CD4-positive, alpha-beta memory T cell (primary cell): ENCODE measurements at regions of chr3 and their contacts with region 1.

Region 1: DNA sequence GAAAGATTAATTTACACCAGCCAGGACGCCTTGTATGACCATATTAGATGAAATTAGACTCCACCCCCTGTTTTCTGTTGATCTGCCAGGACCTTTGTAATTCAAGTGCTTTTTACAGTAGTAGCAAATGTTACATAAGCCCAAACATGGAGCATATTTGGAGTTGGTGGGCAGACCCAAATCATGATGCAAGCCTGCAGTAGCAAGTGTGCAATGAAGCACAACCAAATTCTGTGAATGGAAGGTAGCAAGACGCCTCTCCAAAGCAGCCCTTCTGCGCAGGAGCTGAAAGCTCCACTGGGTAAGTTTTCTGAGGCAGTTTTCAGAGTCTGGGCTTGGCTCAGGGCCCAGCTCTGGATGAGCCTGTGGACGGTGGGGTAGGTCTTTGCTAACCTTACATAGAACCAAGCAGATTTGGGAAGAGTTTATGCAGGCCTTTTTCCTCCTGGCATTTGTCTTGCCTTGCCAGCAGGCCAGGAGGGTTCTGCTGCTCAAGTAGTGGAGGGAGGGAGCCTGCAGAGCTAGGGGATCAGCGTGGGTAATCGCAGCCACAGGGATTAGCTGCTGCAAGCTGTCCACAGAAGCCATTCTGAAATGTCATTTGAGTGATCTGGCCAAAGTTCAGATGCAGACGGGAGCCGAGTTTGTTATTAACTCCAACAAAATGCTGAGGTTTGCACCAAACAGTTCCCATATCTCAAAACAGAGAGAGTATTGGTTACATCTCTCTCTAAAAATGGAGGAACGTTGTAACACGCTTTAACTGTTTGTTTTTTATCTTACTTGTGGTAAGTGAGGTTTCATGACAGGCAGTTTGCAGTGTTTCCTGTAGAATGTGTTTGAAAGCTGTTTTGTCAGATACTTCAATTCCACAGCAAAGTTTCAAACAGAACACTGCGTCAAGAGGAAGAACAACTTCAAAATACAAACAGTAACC is 55.4 kb downstream of the PSMD6 start:
- DNase-seq: peak; percentile 71 to 89 (median 85)
- H3K4me3 ChIP-seq: peak overlapping the region; percentile 65 to 93
- H3K4me3 Mint-ChIP-seq: peak overlapping the region; percentile 89 to 96 (median 92)
- H3K27ac ChIP-seq: peak overlapping the region; percentile 69
- H3K27ac Mint-ChIP-seq: peak overlapping the region; percentile 84 to 98 (median 95)
- H3K4me1 ChIP-seq: peaks cover 69% of the 10 kb centered on the region
- H3K4me1 Mint-ChIP-seq: peaks cover 48 to 82% (median 62%) of the 10 kb centered on the region in 4 donors
- H3K27me3 ChIP-seq: no peaks in the 10 kb centered on the region
- H3K27me3 Mint-ChIP-seq: no peaks in the 10 kb centered on the region

Region 2: DNA sequence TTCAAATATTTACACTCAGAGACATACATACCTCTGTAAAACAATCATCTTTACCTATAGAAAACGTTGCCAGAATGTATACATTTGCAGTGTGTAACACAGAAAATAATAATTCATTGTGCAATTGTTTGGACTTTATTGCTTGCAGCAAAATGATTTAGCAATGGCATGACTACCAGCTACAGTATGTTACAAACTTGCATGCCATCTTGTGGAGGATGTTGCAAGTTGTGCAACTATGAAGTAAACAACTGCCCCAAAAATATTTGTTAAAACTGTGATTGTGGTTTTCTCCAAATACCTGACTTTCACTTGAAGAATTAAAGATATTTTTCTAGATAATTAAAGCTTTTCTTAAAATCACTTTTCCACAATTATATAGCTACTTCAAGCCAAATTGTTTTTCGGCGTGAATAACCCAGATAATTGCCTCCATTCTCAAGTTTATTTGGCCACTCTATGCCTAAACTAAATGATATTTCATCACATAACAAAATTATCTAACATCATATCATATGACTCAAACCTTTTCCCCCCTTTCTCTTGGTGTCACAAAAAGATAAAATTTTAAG is 175.9 kb before region 1 on chr3:
- CTCF ChIA-PET with region 1: no interaction called
- POLR2A ChIA-PET with region 1: no interaction called
- intact Hi-C with region 1: no loop called
- DNase-seq: no peak
- H3K4me3 ChIP-seq: no peak overlapping the region
- H3K4me3 Mint-ChIP-seq: no peak overlapping the region
- H3K27ac ChIP-seq: no peak overlapping the region
- H3K27ac Mint-ChIP-seq: no peak overlapping the region
- H3K4me1 ChIP-seq: no peaks in the 10 kb centered on the region
- H3K4me1 Mint-ChIP-seq: no peaks in the 10 kb centered on the region
- H3K27me3 ChIP-seq: no peaks in the 10 kb centered on the region
- H3K27me3 Mint-ChIP-seq: peaks cover 3 to 5% of the 10 kb centered on the region in 2 donors

Region 3: DNA sequence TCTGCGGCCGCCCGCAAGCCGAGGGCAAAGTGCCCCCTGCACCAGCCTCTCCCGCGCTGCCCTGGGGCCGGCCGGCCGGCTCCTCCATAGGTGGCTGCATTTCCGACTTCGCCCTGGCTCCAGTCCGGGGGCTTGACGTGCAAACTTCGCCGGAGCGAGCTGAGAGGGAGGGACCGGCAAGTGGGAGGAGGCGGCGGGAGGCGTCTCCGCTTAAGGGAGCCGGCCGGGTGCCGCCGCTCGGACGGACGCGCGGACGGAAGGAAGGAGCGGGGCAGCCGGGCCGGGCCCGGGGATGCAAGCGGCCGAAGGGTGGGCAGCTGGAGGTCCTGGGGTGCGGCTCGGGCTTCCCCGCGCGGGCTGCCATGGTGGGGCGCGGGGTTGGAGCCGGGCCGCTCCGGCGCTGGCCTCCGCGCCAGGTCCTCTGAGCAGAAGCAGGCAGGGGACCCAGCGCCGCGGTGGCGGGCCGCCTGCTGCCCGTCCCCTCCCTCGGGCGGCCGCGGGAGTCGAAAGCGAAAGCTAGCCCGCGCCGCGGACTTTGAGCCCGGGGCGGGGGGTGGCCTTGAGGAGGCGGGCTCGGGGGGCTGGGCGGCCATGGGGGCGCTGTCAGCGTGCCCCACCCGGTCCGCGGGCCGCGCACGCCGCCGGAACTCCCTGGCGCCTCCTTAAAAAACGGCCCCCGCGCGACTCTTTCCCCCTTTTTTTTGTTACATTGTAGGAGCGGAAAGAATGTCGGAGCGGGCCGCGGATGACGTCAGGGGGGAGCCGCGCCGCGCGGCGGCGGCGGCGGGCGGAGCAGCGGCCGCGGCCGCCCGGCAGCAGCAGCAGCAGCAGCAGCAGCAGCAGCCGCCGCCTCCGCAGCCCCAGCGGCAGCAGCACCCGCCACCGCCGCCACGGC is 55.8 kb before region 1 on chr3 and contains the start of gene SCAANT1:
- CTCF ChIA-PET with region 1: interaction called, 8 read pairs
- POLR2A ChIA-PET with region 1: interaction called, 34 read pairs
- intact Hi-C with region 1: loop called (anchors 1 kb)
- DNase-seq: peak; percentile 84 to 87 (median 84)
- H3K4me3 ChIP-seq: peak within 1 kb of the TSS; percentile 70 to 77
- H3K4me3 Mint-ChIP-seq: peak within 1 kb of the TSS; percentile 89 to 96 (median 94)
- H3K27ac ChIP-seq: peak within 1 kb of the TSS; percentile 84
- H3K27ac Mint-ChIP-seq: peak within 1 kb of the TSS; percentile 96 to 99 (median 98)
- H3K4me1 ChIP-seq: peaks cover 36% of the 10 kb centered on the region
- H3K4me1 Mint-ChIP-seq: peaks cover 30 to 61% (median 41%) of the 10 kb centered on the region in 4 donors
- H3K27me3 ChIP-seq: no peaks in the 10 kb centered on the region
- H3K27me3 Mint-ChIP-seq: no peaks in the 10 kb centered on the region
- total RNA-seq, gene SCAANT1: not detected

Region 4: DNA sequence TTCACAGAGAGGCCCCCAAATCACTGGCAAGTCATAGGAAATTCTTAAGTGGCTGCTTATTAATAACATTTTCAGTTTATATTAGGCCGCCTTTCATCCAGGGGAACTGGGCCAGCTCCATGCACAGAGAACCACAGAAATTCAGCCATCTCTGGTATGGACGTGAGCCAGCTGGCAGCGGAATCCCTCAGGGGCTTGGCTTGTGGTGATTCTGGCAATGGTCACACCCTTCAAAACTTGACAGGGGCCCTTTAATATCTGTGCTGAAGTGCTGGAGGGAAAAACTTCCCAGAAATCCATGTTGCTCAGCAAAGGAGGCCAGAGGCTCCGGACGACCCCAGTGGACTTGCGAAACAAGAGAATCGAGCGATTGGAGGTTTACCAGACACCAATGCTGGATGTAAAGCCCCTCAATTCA is 246.0 kb after region 1 on chr3:
- CTCF ChIA-PET with region 1: no interaction called
- POLR2A ChIA-PET with region 1: no interaction called
- intact Hi-C with region 1: no loop called
- DNase-seq: no peak
- H3K4me3 ChIP-seq: no peak overlapping the region
- H3K4me3 Mint-ChIP-seq: no peak overlapping the region
- H3K27ac ChIP-seq: no peak overlapping the region
- H3K27ac Mint-ChIP-seq: no peak overlapping the region
- H3K4me1 ChIP-seq: no peaks in the 10 kb centered on the region
- H3K4me1 Mint-ChIP-seq: no peaks in the 10 kb centered on the region
- H3K27me3 ChIP-seq: no peaks in the 10 kb centered on the region
- H3K27me3 Mint-ChIP-seq: peaks cover 0 to 2% of the 10 kb centered on the region in 2 donors